AG04449 (cell line): ENCODE measurements at regions of chr12 and their contacts with region 1.

Region 1: GRCh38 chr12:7892186-7892980 is 19.7 kb upstream of the SLC2A14 start:
- DNase-seq: no peak
- H3K4me3 ChIP-seq: no peak overlapping the region
- CTCF ChIP-seq: no peak

Region 2: GRCh38 chr12:7869127-7869526 is 23.3 kb before region 1 on chr12:
- CTCF ChIA-PET with region 1: no interaction called
- POLR2A ChIA-PET with region 1: no interaction called
- DNase-seq: no peak
- H3K4me3 ChIP-seq: no peak overlapping the region
- CTCF ChIP-seq: no peak

Region 3: GRCh38 chr12:7907009-7907408 is 14.6 kb after region 1 on chr12:
- CTCF ChIA-PET with region 1: interaction called, 10 read pairs
- POLR2A ChIA-PET with region 1: no interaction called
- DNase-seq: no peak
- H3K4me3 ChIP-seq: no peak overlapping the region
- CTCF ChIP-seq: peak; percentile 19

Region 4: DNA sequence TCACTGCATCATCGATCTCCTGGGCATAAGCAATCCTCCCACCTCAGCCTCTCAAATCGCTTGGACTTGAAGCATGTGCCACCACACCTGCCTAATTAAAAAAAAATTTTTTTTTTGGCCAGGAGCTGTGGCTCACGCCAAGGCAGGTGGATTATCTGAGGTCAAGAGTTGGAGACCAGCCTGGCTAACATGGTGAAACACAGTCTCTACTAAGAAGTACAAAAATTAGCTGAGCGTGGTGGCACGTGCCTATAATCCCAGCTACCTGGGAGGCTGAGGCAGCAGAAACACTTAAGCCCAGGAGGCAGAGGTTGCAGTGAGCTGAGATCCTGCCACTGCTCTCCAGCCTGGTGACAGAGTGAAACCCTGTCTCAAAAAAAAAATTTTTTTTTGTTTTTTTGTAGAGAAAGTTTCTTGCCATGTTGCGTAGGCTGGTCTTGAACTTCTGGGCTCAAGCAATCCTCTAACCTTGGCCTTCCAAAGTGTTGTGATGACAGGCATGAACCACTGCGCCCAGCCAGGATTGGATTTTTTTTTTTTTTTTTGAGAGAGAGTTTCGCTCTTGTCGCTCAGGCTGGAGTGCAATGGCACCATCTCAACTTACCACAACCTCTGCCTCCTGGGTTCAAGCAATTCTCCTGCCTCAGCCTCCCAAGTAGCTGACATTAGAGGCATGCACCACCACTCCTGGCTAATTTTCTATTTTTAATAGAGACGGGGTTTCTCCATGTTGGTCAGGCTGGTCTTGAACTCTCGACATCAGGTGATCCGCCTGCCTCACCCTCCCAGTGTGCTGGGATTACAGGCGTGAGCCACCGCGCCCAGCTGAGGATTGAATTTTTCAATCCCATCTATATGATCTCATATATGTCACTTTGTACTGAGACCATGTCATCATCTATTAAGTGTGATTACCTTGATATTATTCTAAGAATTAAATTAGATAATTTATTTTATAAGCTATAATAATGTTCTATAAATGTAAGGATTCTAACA is 31.2 kb after region 1 on chr12:
- CTCF ChIA-PET with region 1: no interaction called
- POLR2A ChIA-PET with region 1: no interaction called
- DNase-seq: no peak
- H3K4me3 ChIP-seq: no peak overlapping the region
- CTCF ChIP-seq: no peak